ENCODE measurements at regions of chr5 and their contacts with region 1.

Region 1: DNA sequence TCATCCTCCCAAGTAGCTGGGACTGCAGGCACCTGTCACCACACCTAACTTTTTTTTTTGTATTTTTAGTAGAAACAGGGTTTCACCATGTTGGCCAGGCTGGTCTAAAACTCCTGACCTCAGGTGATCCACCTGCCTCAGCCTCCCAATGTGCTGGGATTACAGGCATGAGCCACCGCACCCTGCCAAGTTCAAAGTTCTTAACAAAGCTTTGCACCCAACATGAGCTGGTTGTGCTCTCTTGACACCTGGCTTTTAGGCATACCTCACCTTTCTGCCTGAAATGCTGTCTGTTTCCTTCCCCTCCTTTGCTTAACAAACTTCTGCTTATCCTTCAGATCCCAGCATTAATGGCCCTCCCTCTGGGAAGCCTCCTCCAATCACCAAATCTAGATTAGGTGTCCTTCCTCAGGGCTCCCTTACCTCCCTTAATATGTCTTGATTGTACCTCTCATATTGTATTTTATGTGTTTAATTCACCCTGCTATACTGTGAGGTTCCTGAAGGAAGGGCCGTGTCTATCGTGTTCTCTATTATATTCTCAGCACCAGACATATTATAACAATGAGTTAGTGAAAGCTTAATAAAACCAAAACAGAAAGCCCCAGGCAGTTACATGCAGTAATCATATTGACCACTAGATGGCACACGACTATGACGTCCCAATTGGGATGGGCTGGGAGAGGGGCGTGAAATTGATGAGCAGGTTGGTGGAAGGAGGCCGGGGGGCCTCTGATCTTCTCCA is 62.9 kb upstream of the PPARGC1B start:
- DNase-seq: peak; percentile 57
- ATAC-seq: peak; percentile 85
- H3K4me3 ChIP-seq: no peak overlapping the region
- H3K27ac ChIP-seq: no peak overlapping the region
- H3K4me1 ChIP-seq: peaks cover 3 to 7% of the 10 kb centered on the region in 2 experiments; a peak in 3 of 4 replicates
- H3K27me3 ChIP-seq: no peaks in the 10 kb centered on the region
- CTCF ChIP-seq: peak; percentile 78 to 97 (median 92)
- POLR2A ChIP-seq: no peak
- RAD21 ChIP-seq: peak; percentile 79

Region 2: GRCh38 chr5:148791334-148791667 is 876.0 kb before region 1 on chr5:
- CTCF ChIA-PET with region 1: no interaction called
- POLR2A ChIA-PET with region 1: no interaction called
- RAD21 ChIA-PET with region 1: no interaction called
- intact Hi-C with region 1: no loop called
- DNase-seq: no peak
- ATAC-seq: no peak
- H3K4me3 ChIP-seq: no peak overlapping the region
- H3K27ac ChIP-seq: no peak overlapping the region
- H3K4me1 ChIP-seq: peaks cover 0 to 22% of the 10 kb centered on the region in 2 experiments; a peak in 2 of 4 replicates
- H3K27me3 ChIP-seq: no peaks in the 10 kb centered on the region
- CTCF ChIP-seq: no peak
- POLR2A ChIP-seq: no peak
- RAD21 ChIP-seq: no peak

Region 3: GRCh38 chr5:149656576-149657182 is 10.6 kb before region 1 on chr5:
- CTCF ChIA-PET with region 1: interaction called, 11 read pairs
- POLR2A ChIA-PET with region 1: no interaction called
- RAD21 ChIA-PET with region 1: no interaction called
- intact Hi-C with region 1: no loop called
- DNase-seq: no peak
- ATAC-seq: peak; percentile 73
- H3K4me3 ChIP-seq: no peak overlapping the region
- H3K27ac ChIP-seq: no peak overlapping the region
- H3K4me1 ChIP-seq: no peaks in the 10 kb centered on the region
- H3K27me3 ChIP-seq: no peaks in the 10 kb centered on the region
- CTCF ChIP-seq: peak; percentile 60 to 93 (median 87)
- POLR2A ChIP-seq: no peak
- RAD21 ChIP-seq: peak; percentile 61

Region 4: GRCh38 chr5:149680810-149681221 is 13.6 kb after region 1 on chr5:
- CTCF ChIA-PET with region 1: interaction called, 12 read pairs
- POLR2A ChIA-PET with region 1: no interaction called
- RAD21 ChIA-PET with region 1: no interaction called
- intact Hi-C with region 1: no loop called
- DNase-seq: no peak
- ATAC-seq: no peak
- H3K4me3 ChIP-seq: no peak overlapping the region
- H3K27ac ChIP-seq: no peak overlapping the region
- H3K4me1 ChIP-seq: no peaks in the 10 kb centered on the region
- H3K27me3 ChIP-seq: peaks cover 16% of the 10 kb centered on the region; the same call in 1 of the 2 replicates
- CTCF ChIP-seq: no peak
- POLR2A ChIP-seq: no peak
- RAD21 ChIP-seq: no peak

Region 5: GRCh38 chr5:149731639-149732323 is 64.5 kb after region 1 on chr5:
- CTCF ChIA-PET with region 1: interaction called, 3 read pairs
- POLR2A ChIA-PET with region 1: no interaction called
- RAD21 ChIA-PET with region 1: no interaction called
- intact Hi-C with region 1: loop called (anchors 5 kb)
- DNase-seq: peak; percentile 64
- ATAC-seq: peak; percentile 57
- H3K4me3 ChIP-seq: peak overlapping the region; percentile 77 to 78
- H3K27ac ChIP-seq: peak overlapping the region; percentile 20; the same call in 1 of the 2 replicates
- H3K4me1 ChIP-seq: peaks cover 7 to 18% of the 10 kb centered on the region in 2 experiments; a peak in 3 of 4 replicates
- H3K27me3 ChIP-seq: no peaks in the 10 kb centered on the region
- CTCF ChIP-seq: no peak
- POLR2A ChIP-seq: no peak
- RAD21 ChIP-seq: no peak

Region 6: GRCh38 chr5:149828161-149828884 is 161.1 kb after region 1 on chr5:
- CTCF ChIA-PET with region 1: interaction called, 16 read pairs
- POLR2A ChIA-PET with region 1: no interaction called
- RAD21 ChIA-PET with region 1: interaction called in 1 of 2 experiments, 7 read pairs
- intact Hi-C with region 1: loop called (anchors 1 kb)
- DNase-seq: peak; percentile 77
- ATAC-seq: peak; percentile 92
- H3K4me3 ChIP-seq: no peak overlapping the region
- H3K27ac ChIP-seq: no peak overlapping the region
- H3K4me1 ChIP-seq: peaks cover 0 to 2% of the 10 kb centered on the region in 2 experiments; a peak in 1 of 4 replicates
- H3K27me3 ChIP-seq: no peaks in the 10 kb centered on the region
- CTCF ChIP-seq: peak; percentile 79 to 95 (median 91)
- POLR2A ChIP-seq: no peak
- RAD21 ChIP-seq: peak; percentile 97

Measured in HCT116 (cell line).